Endothelial cell of umbilical vein (primary cell): ENCODE measurements at regions of chr9 and their contacts with region 1.

Region 1: DNA sequence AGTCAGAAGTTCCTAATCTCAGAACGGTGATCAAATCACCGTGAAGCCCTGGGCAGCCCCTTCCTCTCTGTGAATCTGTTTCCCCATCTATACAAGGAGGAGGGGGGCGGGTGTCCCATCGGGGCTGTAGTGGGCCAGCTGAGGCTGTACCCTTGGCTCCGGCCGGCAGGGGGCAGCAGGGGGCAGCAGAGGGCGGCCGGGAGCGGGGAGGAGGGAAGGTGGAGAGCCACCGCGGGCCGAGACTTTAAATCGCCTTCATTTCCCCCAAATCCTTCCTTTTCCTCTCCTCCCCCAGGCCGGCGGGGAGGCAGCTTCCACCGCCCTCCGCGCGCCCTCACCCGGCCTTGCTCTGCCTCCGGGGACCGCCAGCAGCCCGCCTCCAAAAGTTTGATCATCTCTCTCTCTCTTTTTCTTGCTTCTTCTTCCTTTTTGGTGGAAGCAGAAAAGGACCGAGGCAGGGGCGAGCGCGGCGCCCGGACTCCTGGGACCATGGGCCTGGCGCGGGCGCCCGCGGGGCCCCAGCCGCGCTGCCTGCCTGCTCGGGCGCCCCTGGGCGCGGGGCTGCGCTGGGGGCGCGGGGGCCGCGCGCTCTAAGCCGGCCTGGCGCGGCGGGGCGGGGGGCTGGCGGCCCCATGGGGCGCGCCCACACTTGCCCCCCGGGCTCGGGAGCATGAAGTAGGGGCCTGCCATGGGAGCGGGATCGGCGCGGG is at the start of gene COL27A1:
- DNase-seq: peak; percentile 81
- H3K4me3 ChIP-seq: peak within 1 kb of the TSS; percentile 41 to 79 (median 68)
- H3K27ac ChIP-seq: peak within 1 kb of the TSS; percentile 36
- H3K4me1 ChIP-seq: peaks cover 25% of the 10 kb centered on the region
- H3K27me3 ChIP-seq: peaks cover 16 to 18% of the 10 kb centered on the region in 2 experiments
- CTCF ChIP-seq: peak; percentile 82 to 97
- POLR2A ChIP-seq: no peak
- total RNA-seq, gene COL27A1: 48.6 and 49.1 TPM in 2 replicates

Region 2: DNA sequence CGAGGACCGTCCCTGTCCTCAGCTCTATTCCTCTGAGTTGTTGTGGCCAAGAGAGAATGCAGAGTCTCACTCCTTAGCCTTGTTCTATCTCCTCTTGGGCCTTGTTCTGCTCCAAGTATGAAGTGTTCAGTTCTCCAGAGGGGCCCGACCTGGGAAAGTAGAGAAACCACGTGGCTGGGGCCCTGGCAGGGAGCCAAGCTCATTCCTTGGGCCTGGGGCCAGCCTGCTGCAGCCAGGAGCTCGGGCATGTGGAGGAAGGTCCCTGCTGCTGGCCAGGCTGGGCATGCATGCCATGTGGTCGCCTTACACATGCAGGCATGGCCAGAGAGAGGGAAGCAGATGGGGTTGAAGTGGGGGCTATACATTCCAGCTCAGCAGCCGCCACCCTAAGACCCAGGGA is 60.7 kb after region 1 on chr9:
- CTCF ChIA-PET with region 1: interaction called, 10 read pairs
- POLR2A ChIA-PET with region 1: no interaction called
- dilution Hi-C with region 1: no loop called
- intact Hi-C with region 1: no loop called
- DNase-seq: peak; percentile 77
- H3K4me3 ChIP-seq: no peak overlapping the region
- H3K27ac ChIP-seq: no peak overlapping the region
- H3K4me1 ChIP-seq: peaks cover 18% of the 10 kb centered on the region
- H3K27me3 ChIP-seq: no peaks in the 10 kb centered on the region
- CTCF ChIP-seq: no peak
- POLR2A ChIP-seq: no peak

Region 3: DNA sequence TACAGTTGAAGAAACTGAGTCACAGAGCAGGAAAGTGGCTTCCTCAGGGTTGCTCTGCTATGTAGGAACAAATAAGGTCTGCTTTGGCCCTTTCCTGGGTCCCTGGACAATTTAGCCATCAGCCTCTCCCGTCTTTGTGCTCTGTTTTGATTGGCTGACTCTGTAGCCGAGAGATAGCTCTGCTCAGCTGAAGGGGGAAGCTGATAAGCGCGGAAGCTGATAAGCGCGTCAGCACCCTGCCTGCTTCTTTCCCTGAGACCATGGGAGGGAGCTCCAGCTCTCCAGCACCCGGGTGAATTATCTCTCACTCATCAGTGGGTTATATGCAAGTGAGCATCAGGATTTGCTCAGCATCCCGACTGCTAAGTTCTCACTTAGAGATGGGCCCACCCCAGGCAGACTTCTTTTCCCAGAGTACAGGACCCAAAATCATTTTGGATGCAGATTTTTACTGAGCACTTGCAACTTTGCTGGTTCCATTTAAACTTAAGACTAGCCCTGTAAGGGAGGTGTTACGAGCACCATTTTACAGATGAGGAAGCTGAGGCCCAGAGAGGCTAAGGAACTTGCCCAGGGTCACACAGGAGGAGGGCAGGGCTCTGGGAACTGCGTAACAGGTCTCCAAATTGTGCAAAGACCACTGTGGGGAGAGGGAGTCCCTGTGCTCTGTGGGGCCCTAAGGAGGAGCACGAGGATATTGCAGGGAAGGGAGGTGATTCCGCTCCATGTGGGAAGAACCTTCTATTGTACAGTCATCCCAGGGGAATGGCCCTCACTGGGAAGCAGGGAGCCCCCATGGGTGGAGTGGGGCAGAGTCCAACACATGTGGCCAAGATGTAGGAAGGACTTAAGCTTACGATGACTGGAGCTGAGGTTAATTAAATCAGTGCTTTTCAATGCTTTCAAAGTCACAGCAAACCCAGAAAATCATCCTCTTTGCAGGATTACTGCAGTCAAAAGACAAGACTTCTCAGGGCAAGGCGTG is 83.8 kb after region 1 on chr9:
- CTCF ChIA-PET with region 1: interaction called, 11 read pairs
- POLR2A ChIA-PET with region 1: no interaction called
- dilution Hi-C with region 1: no loop called
- intact Hi-C with region 1: no loop called
- DNase-seq: peak; percentile 51
- H3K4me3 ChIP-seq: no peak overlapping the region
- H3K27ac ChIP-seq: no peak overlapping the region
- H3K4me1 ChIP-seq: peaks cover 8% of the 10 kb centered on the region
- H3K27me3 ChIP-seq: no peaks in the 10 kb centered on the region
- CTCF ChIP-seq: peak in 1 of 2 donors; percentile 50
- POLR2A ChIP-seq: no peak

Region 4: DNA sequence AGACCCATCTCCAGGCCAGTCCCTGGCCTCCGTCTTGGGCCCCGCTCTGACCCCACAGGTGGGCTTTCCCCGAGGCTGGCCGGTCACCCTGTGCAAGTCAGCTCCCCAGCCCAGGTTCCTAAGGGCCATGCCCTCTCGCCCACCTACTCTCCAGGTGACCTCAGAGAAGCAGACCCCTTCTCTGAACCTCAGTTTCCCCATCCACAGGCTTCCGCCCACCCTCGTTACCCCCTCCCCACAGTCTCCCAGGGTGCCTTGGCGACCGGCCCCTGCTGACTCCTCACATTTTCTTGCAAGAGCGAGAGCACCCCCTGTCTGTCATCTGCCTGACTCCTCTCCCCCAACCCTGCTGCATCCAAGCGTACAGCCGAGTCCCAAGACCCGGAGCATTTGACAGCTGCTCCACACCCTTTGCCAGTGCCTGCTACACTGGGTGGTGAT is 116.2 kb after region 1 on chr9:
- CTCF ChIA-PET with region 1: interaction called, 15 read pairs
- POLR2A ChIA-PET with region 1: no interaction called
- dilution Hi-C with region 1: no loop called
- intact Hi-C with region 1: loop called (anchors 1 kb)
- DNase-seq: peak; percentile 58
- H3K4me3 ChIP-seq: no peak overlapping the region
- H3K27ac ChIP-seq: no peak overlapping the region
- H3K4me1 ChIP-seq: no peaks in the 10 kb centered on the region
- H3K27me3 ChIP-seq: no peaks in the 10 kb centered on the region
- CTCF ChIP-seq: peak; percentile 23 to 75
- POLR2A ChIP-seq: no peak

Region 5: GRCh38 chr9:114285166-114285867 is 129.9 kb after region 1 on chr9:
- CTCF ChIA-PET with region 1: interaction called, 127 read pairs
- POLR2A ChIA-PET with region 1: no interaction called
- dilution Hi-C with region 1: no loop called
- intact Hi-C with region 1: no loop called
- DNase-seq: peak; percentile 37
- H3K4me3 ChIP-seq: no peak overlapping the region
- H3K27ac ChIP-seq: no peak overlapping the region
- H3K4me1 ChIP-seq: no peaks in the 10 kb centered on the region
- H3K27me3 ChIP-seq: no peaks in the 10 kb centered on the region
- CTCF ChIP-seq: no peak
- POLR2A ChIP-seq: no peak